ENCODE measurements at regions of chr1 and their contacts with region 1.

Region 1: GRCh38 chr1:207097871-207098324 is 6.1 kb upstream of the C4BPA start:
- DNase-seq: peak; percentile 64
- H3K4me3 Mint-ChIP-seq: no peak overlapping the region
- H3K27ac Mint-ChIP-seq: peak overlapping the region; percentile 78
- H3K4me1 Mint-ChIP-seq: peaks cover 14% of the 10 kb centered on the region
- H3K27me3 Mint-ChIP-seq: peaks cover 24% of the 10 kb centered on the region

Region 2: DNA sequence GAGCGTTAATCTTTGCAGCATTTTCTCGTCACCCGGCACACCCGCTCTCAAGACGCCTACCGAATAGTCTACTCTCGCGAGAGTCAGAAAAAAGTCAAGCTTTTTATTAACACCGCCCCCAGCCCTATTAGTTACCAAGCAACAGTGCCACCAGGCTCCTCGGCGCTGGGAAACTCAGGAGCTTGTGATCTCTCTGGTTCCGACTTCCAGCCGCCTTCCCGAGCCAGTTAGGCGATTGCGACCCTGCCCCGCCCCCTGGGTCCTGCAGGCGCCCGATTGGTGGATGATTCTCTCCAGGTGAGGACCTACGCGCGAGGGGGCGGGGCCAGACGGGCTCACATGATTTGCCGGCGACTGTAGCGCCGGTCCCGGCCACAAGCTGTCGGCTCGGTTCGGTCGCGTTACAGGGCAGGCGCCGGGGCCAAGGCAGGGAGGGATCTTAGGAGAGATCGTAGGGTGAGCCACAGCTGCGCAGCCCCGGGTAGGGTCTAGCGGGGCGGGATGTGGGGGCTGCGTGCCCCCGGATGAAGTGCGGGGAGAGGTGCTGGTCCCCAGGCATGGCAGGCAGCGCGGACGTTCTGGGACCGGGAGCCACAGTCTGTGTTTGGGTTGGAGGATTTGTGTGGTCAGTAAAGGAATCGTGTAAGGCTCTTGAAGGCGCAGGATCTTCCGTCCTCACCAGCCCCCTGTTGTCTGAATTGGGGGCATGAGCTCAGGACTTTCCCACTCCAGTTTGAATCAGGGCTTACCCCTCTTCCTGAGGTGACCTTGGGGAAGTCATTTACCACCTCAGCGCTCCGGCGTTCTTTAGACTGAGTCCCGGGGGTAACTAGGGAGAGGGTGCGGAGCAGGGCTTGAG is 44.8 kb before region 1 on chr1 and contains the start of gene PFKFB2:
- CTCF ChIA-PET with region 1: no interaction called
- POLR2A ChIA-PET with region 1: no interaction called
- intact Hi-C with region 1: loop called (anchors 1 kb)
- DNase-seq: peak; percentile 95
- H3K4me3 Mint-ChIP-seq: peak within 1 kb of the TSS; percentile 93
- H3K27ac Mint-ChIP-seq: peak within 1 kb of the TSS; percentile 67
- H3K4me1 Mint-ChIP-seq: peaks cover 33% of the 10 kb centered on the region
- H3K27me3 Mint-ChIP-seq: no peaks in the 10 kb centered on the region
- total RNA-seq, gene PFKFB2: 2.1 to 2.5 TPM

Region 3: GRCh38 chr1:207321079-207321789 is 223.3 kb after region 1 on chr1 and contains the start of gene CD55:
- CTCF ChIA-PET with region 1: no interaction called
- POLR2A ChIA-PET with region 1: interaction called, 3 read pairs
- intact Hi-C with region 1: loop called (anchors 1 kb)
- DNase-seq: peak; percentile 99
- H3K4me3 Mint-ChIP-seq: peak within 1 kb of the TSS; percentile 92
- H3K27ac Mint-ChIP-seq: peak within 1 kb of the TSS; percentile 96
- H3K4me1 Mint-ChIP-seq: peaks cover 33% of the 10 kb centered on the region
- H3K27me3 Mint-ChIP-seq: no peaks in the 10 kb centered on the region
- total RNA-seq, gene CD55: 40.4 to 42.3 TPM

Region 4: DNA sequence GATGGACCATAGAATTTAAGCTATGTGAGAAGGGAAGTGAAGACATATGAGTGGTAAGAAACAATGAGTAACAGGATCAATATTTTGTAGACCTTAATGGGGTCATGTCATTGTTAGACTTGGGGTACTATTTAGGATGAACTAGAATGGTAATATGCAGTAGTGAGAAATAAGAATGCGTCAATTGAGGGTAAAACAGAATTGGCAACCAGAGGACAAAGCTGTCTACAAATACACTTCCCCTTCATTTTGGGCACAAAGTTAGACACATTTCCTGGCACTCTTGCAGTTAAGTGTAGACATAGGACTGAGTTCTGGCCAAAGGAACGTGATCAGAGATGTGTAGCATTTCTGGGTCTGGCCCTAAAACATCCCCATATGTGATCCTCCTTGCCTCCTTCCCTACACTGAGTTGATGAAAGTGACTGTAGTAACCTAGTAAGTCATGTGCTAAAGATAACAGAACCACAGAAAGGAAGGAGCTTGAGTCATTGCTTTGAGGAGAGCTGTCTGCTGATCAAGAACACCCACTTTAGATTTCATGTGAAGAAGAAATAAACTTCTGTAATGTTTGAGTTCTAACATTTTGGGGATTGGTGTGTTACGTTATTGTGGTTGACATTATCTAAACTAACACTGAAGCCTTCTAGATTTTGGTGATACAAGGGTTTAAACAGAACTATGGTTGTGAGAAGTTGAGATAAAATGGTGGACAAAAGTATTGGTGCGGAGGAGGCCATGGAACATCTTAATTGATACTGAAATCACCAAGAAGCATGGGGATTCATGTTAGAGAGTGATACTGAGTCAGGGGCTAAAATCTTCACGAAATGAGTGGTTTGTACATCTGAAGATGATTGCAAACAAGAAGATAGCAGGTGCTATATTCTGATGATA is 265.3 kb after region 1 on chr1:
- CTCF ChIA-PET with region 1: no interaction called
- POLR2A ChIA-PET with region 1: interaction called, 3 read pairs
- intact Hi-C with region 1: loop called (anchors 1 kb)
- DNase-seq: peak; percentile 18
- H3K4me3 Mint-ChIP-seq: no peak overlapping the region
- H3K27ac Mint-ChIP-seq: no peak overlapping the region
- H3K4me1 Mint-ChIP-seq: no peaks in the 10 kb centered on the region
- H3K27me3 Mint-ChIP-seq: no peaks in the 10 kb centered on the region

Region 5: DNA sequence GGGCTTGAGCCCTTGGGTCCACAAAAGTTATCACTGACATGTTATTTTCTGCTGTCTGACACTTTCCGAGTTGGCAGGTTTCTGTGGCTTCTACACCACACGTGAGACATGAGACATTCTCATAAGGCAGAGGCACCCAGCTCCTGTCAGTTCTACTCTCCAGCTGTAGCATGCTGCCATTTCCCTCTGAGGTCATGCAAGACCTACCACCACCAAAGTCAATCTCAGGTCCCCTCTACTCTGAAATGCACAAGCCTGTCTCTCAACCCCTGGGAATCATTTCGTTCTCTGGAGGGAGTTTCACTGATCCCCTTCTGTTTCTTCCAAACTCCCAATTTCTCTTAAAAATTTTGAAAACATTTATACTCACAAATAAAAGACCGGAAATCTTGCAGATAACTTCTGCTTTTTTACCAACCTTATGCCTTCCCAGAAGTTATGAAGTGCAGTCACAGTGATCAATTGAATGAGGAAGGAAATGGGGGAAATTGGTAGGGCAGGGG is 316.8 kb after region 1 on chr1:
- CTCF ChIA-PET with region 1: no interaction called
- POLR2A ChIA-PET with region 1: no interaction called
- intact Hi-C with region 1: loop called (anchors 2 kb)
- DNase-seq: peak; percentile 63
- H3K4me3 Mint-ChIP-seq: no peak overlapping the region
- H3K27ac Mint-ChIP-seq: no peak overlapping the region
- H3K4me1 Mint-ChIP-seq: peaks cover 25% of the 10 kb centered on the region
- H3K27me3 Mint-ChIP-seq: peaks cover 3% of the 10 kb centered on the region